ENCODE measurements at regions of chr2 and their contacts with region 1.

Region 1: DNA sequence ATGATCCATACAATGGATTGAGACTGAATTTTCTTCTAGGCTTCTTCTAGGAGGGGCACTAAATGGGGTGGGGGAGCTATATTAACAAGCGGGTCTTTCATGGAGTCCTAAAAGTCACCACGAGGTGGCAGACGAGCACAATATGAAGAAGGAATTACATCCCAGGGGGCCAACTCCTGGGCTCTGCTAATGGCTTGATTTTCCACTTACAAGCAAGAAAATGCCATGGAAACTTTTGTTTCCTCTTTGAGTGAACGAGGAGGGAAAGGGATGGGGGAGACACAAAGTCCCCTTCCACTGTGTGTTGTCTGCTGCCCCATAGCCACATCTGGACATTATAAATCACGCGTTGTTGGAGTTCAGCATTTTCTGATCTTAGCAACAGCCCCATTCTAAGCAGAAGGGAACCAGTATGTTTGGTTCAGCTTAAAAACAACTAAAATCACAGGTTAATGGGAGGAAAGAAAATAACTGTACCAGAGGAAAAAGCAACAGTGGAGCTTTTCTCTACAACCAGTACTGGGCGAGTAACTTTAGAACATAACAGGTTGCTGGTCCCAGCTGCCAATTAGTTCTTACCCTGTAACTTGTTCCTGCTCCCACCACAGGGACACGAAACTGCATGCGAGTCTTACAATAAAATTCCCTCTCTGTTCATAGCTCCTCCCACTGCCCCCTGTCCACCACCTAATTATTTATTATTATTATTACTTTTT is 285.0 kb upstream of the PARD3B start:
- DNase-seq: peak; percentile 77
- ATAC-seq: peak; percentile 97
- H3K4me3 ChIP-seq: no peak overlapping the region
- H3K27ac ChIP-seq: no peak overlapping the region
- H3K4me1 ChIP-seq: no peaks in the 10 kb centered on the region
- H3K27me3 ChIP-seq: no peaks in the 10 kb centered on the region
- CTCF ChIP-seq: peak; percentile 75
- EP300 ChIP-seq: no peak
- POLR2A ChIP-seq: no peak
- RAD21 ChIP-seq: peak; percentile 62

Region 2: GRCh38 chr2:204145263-204145751 is 115.0 kb before region 1 on chr2:
- CTCF ChIA-PET with region 1: no interaction called
- POLR2A ChIA-PET with region 1: no interaction called
- in situ Hi-C with region 1: no loop called
- intact Hi-C with region 1: loop called (anchors 5 kb)
- DNase-seq: peak; percentile 65
- ATAC-seq: peak; percentile 100
- H3K4me3 ChIP-seq: no peak overlapping the region; a peak in 1 of 6 replicates
- H3K27ac ChIP-seq: no peak overlapping the region
- H3K4me1 ChIP-seq: no peaks in the 10 kb centered on the region
- H3K27me3 ChIP-seq: peaks cover 0 to 4% of the 10 kb centered on the region in 2 experiments; a peak in 2 of 5 replicates
- CTCF ChIP-seq: peak; percentile 96
- EP300 ChIP-seq: no peak
- POLR2A ChIP-seq: no peak
- RAD21 ChIP-seq: peak; percentile 80

Region 3: GRCh38 chr2:204691911-204692510 is 431.7 kb after region 1 on chr2:
- CTCF ChIA-PET with region 1: interaction called, 9 read pairs
- POLR2A ChIA-PET with region 1: no interaction called
- in situ Hi-C with region 1: no loop called
- intact Hi-C with region 1: loop called (anchors 1 kb)
- DNase-seq: peak; percentile 75
- ATAC-seq: peak; percentile 77
- H3K4me3 ChIP-seq: no peak overlapping the region
- H3K27ac ChIP-seq: no peak overlapping the region
- H3K4me1 ChIP-seq: no peaks in the 10 kb centered on the region
- H3K27me3 ChIP-seq: no peaks in the 10 kb centered on the region
- CTCF ChIP-seq: peak; percentile 77
- EP300 ChIP-seq: no peak
- POLR2A ChIP-seq: no peak
- RAD21 ChIP-seq: peak; percentile 66

Region 4: DNA sequence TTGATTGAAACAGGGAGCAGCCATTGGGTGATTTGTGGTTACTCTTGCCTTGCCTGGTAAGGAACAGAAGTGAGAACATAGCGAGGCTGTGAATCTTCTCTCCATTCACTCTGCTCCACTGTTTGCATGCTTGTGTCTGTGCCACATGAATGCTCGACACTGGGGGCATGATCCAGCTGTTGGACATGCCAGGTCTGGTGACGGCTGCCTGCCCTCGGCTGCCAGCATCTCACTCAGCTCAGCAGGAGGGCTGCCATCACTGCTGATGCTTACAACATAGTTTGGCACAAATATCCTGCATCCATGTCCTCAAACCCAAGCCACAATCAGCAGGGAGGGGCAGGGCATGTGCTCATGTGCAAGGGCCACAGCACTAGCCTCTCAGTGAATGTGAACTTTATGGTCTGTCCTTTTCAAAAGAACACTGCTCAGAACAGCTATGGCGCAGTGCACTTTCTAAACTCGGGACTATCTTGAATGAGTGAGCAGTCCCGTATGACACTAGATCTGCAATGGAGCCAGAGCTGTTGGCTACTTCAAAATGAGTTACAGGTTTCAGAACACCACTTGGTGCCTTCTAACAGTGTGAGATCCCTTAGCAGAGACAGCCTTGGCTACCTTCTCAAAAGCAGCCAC is 1548.3 kb after region 1 on chr2:
- CTCF ChIA-PET with region 1: no interaction called
- POLR2A ChIA-PET with region 1: no interaction called
- in situ Hi-C with region 1: no loop called
- intact Hi-C with region 1: loop called (anchors 1 kb)
- DNase-seq: no peak
- ATAC-seq: no peak
- H3K4me3 ChIP-seq: no peak overlapping the region
- H3K27ac ChIP-seq: no peak overlapping the region
- H3K4me1 ChIP-seq: peaks cover 17% of the 10 kb centered on the region
- H3K27me3 ChIP-seq: peaks cover 3 to 34% of the 10 kb centered on the region in 2 experiments; a peak in 4 of 5 replicates
- CTCF ChIP-seq: no peak
- EP300 ChIP-seq: no peak
- POLR2A ChIP-seq: no peak
- RAD21 ChIP-seq: no peak

Region 5: GRCh38 chr2:205885492-205886099 is 1625.3 kb after region 1 on chr2:
- CTCF ChIA-PET with region 1: interaction called, 5 read pairs
- POLR2A ChIA-PET with region 1: no interaction called
- in situ Hi-C with region 1: no loop called
- intact Hi-C with region 1: loop called (anchors 5 kb)
- DNase-seq: peak; percentile 65
- ATAC-seq: peak; percentile 99
- H3K4me3 ChIP-seq: no peak overlapping the region
- H3K27ac ChIP-seq: no peak overlapping the region
- H3K4me1 ChIP-seq: no peaks in the 10 kb centered on the region
- H3K27me3 ChIP-seq: peaks cover 0 to 3% of the 10 kb centered on the region in 2 experiments; a peak in 1 of 5 replicates
- CTCF ChIP-seq: peak; percentile 97
- EP300 ChIP-seq: no peak
- POLR2A ChIP-seq: no peak
- RAD21 ChIP-seq: peak; percentile 97